Heart right ventricle (tissue), 16 donors: ENCODE measurements at regions of chr5 and their contacts with region 1.

Region 1: DNA sequence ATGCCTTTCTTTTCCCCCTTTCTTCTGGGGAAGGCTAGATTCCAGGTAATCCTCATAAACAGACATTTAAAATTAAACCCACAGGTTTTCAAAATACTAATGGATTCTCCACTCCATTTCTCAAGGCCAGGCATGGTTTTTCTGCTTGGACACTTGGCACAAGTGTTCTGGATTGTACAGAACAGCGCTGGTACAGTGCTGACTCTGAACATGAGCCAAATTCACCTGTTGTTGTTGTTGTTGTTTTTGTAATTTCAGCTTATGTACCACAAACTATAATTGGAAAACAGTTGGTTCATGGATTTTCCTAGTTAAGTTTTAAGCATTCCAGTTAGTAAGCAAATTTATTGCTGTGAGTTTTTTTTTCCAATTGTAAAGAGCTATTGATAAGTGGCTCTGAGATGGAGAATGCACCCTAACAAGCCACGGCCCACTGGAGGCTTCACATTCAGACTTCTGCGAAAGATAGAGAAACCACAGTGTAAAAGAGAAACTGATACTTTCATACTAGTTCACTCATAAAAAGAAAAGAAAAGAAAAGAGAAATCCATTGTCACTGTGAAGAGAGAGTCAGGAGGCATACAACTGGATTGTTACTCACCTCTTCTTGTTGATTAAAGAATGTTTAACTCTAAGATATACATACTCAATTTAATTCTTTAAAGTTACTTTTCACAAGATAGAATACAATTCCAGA is 16.2 kb upstream of the ITGA1 start:
- DNase-seq: no peak
- ATAC-seq: no peak
- H3K4me3 ChIP-seq: no peak overlapping the region
- H3K27ac ChIP-seq: peak overlapping the region in 3 of 10 donors; percentile 79 to 87 (median 81)
- H3K4me1 ChIP-seq: peaks cover 0 to 39% (median 25%) of the 10 kb centered on the region in 9 donors
- H3K27me3 ChIP-seq: no peaks in the 10 kb centered on the region
- CTCF ChIP-seq: no peak

Region 2: DNA sequence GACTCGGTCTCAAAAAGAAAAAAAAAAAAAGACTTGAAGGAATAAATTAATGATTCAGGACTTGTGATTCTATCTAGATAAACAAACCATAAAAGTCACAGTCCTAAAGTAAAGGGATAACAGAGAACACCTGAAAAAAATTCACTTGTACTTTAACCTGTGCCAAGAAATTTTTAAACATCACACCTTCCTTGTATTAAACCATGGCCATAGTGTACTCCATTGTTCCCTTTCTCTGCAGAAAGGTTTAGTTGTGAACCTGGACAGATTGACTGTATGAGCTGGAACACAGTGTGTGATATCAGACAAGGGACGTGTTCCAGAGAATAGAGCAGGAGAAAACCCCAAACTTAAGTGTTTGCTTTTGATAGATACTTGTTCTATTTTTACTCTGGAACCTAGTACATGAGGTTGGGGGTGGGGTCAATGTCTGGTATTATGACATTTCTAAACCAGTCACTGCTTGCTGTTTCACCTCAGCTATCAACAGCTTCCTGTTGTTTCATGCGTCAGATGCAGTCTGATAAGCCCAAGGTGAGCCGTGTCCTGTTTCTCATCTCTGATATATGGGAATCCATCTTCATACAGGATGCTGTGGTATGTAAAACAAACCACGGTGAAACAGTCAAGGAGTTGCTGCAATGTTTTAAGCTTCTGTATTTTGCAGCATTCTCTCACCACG is 46.3 kb before region 1 on chr5:
- intact Hi-C with region 1: loop called in 1 of 10 experiments (anchors 5 kb)
- DNase-seq: peak in 1 of 2 donors; percentile 12
- ATAC-seq: peak in 7 of 8 donors; percentile 45 to 72 (median 56)
- H3K4me3 ChIP-seq: no peak overlapping the region
- H3K27ac ChIP-seq: peak overlapping the region in 8 of 10 donors; percentile 15 to 79 (median 58)
- H3K4me1 ChIP-seq: peaks cover 0 to 45% (median 36%) of the 10 kb centered on the region in 9 donors
- H3K27me3 ChIP-seq: no peaks in the 10 kb centered on the region
- CTCF ChIP-seq: no peak